Transverse colon (tissue), 4 donors: ENCODE measurements at regions of chr4 and their contacts with region 1.

Region 1: GRCh38 chr4:2578106-2578505 is 41.7 kb downstream of the FAM193A start:
- DNase-seq: no peak
- H3K4me3 ChIP-seq: no peak overlapping the region
- H3K27ac ChIP-seq: no peak overlapping the region
- H3K4me1 ChIP-seq: peaks cover 2 to 8% (median 7%) of the 10 kb centered on the region in 4 donors
- H3K27me3 ChIP-seq: no peaks in the 10 kb centered on the region
- CTCF ChIP-seq: no peak
- EP300 ChIP-seq: no peak
- POLR2A ChIP-seq: no peak

Region 2: DNA sequence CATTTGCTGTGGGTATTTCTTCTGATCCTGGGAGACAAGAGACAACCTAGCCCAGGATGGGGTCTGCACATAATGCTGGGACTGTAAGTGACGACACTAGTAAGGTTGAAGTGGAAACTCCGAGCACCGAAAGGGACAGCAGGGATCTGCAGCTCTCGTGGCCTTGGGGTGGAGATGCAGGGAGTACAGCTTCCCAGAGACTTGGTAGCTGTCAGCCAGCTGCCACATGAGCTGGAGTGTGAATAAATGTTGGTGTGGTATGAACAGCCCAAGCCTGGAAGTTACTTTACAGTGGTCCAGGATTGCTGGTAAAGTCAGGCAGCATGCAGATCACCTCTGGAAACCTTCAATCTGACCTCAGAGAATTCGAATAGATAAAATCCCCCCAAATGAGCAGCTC is 55.9 kb after region 1 on chr4:
- in situ Hi-C with region 1: no loop called
- intact Hi-C with region 1: loop called (anchors 2 kb)
- DNase-seq: no peak
- H3K4me3 ChIP-seq: no peak overlapping the region
- H3K27ac ChIP-seq: no peak overlapping the region
- H3K4me1 ChIP-seq: no peaks in the 10 kb centered on the region
- H3K27me3 ChIP-seq: no peaks in the 10 kb centered on the region
- CTCF ChIP-seq: no peak
- EP300 ChIP-seq: no peak
- POLR2A ChIP-seq: no peak

Region 3: GRCh38 chr4:2745981-2746806 is 168.1 kb after region 1 on chr4:
- in situ Hi-C with region 1: no loop called
- intact Hi-C with region 1: no loop called
- DNase-seq: peak; percentile 39
- H3K4me3 ChIP-seq: no peak overlapping the region
- H3K27ac ChIP-seq: peak overlapping the region in 2 of 4 donors; percentile 24 to 30
- H3K4me1 ChIP-seq: peaks cover 2 to 39% (median 21%) of the 10 kb centered on the region in 4 donors
- H3K27me3 ChIP-seq: no peaks in the 10 kb centered on the region
- CTCF ChIP-seq: no peak
- EP300 ChIP-seq: no peak
- POLR2A ChIP-seq: no peak